ENCODE measurements at regions of chr6 and their contacts with region 1.

Region 1: DNA sequence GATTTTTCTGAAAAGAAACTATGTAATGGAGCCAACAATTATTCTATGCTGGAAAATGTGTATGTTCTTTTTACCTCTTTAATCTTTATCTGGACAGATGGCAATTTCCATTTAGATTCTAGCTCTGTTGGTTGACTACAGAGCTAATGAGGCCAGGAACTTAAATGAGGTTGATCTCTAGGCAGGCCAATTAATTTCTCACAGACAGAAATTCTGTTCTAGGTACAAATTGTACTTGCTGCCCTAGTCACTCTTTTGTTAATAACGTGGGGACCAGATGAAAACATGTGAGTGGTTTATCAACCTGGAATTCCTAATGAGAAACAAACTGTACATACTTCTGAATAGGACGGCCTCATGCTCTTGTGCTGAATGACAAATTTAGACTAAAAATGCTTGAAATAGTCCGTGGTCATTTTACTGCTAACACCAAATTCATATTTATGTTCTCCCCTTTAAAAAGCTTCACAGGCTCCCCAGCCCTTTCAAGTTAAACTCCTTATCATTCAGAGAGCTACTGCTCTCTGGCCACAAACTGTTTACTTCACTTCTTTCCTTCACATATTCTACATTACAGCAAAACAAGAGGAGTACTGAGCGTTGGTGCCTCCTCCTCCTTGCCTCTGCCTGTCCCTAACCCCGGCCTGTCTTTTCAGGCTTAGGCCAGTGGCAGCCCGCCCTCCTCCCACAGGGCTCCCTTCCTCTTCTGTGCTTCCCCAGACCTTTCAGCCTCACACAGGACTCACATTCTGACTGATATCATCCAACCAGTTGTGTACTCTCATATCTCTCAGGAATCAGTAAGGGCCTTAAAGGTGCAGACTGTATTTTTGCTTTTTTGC is 41.4 kb downstream of the DTNBP1 start:
- DNase-seq: no peak
- H3K4me3 Mint-ChIP-seq: no peak overlapping the region
- H3K27ac Mint-ChIP-seq: no peak overlapping the region
- H3K4me1 Mint-ChIP-seq: peaks cover 24% of the 10 kb centered on the region
- H3K27me3 Mint-ChIP-seq: no peaks in the 10 kb centered on the region

Region 2: DNA sequence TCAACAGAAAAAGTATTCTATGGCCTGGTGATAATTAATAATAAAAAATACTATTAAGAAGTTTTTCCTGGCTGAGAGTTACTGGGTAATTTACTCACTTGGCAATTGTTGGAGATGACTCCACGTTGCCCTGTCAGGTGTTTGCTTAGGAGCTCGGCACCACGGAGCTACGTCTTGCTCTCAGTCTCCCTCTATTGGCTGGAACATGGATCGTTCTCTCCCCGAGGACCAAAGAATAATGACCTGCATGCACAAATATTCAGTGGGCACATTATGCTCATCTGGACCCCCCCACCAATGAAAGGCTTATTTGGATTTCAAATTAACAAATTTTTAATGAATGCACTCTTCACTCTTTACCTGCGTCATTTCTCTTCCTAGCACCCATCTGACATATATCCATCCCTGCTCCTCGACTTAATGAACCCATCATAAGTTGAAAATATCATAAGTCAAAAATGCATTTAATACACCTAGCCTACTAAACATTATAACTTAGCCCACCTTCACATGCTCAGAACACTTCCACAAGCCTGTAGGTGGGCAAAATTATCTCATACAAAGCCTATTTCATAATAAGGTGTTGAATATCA is 1574.9 kb before region 1 on chr6:
- CTCF ChIA-PET with region 1: no interaction called
- intact Hi-C with region 1: loop called (anchors 10 kb)
- DNase-seq: peak; percentile 62
- H3K4me3 Mint-ChIP-seq: no peak overlapping the region
- H3K27ac Mint-ChIP-seq: no peak overlapping the region
- H3K4me1 Mint-ChIP-seq: no peaks in the 10 kb centered on the region
- H3K27me3 Mint-ChIP-seq: peaks cover 18% of the 10 kb centered on the region

Region 3: GRCh38 chr6:14210663-14211561 is 1410.5 kb before region 1 on chr6:
- CTCF ChIA-PET with region 1: interaction called, 3 read pairs
- intact Hi-C with region 1: loop called (anchors 1 kb)
- DNase-seq: peak; percentile 88
- H3K4me3 Mint-ChIP-seq: peak overlapping the region; percentile 79
- H3K27ac Mint-ChIP-seq: peak overlapping the region; percentile 71
- H3K4me1 Mint-ChIP-seq: peaks cover 12% of the 10 kb centered on the region
- H3K27me3 Mint-ChIP-seq: no peaks in the 10 kb centered on the region

Region 4: DNA sequence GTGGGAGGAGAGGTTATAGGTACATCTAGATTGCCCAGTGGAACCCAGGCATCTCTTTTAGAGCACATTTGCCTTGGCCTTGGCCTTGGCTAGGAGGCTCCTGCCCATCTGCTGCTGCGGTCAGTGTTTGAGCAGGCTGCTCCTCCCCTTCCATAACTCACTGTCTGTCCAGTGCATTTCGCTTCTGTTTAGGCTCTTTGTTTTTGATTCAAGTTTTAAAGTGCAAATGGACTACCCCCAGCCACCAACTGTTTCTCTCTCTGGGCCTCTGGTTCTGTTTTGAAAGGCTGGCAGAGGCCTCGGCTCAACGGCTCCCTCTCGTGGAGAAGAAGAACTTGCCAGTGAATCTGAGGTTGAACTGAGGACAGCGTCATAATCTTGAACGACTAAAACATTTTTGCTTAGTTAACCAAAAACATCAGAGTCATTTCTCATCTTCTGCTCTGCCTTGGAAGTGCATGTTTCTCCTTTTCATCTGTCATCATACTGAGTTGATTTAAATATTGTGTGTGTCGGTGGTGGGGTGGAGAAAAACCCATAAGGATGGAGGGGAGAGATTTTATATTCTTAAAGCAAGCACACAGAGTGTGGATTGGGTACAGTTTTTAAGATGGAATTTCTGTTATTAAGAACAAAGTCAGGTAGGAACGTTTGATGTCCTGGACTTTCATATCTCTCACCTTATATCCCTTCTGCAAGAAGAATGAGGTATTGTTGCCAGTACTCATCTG is 130.0 kb before region 1 on chr6:
- CTCF ChIA-PET with region 1: no interaction called
- intact Hi-C with region 1: loop called (anchors 1 kb)
- DNase-seq: peak; percentile 86
- H3K4me3 Mint-ChIP-seq: no peak overlapping the region
- H3K27ac Mint-ChIP-seq: peak overlapping the region; percentile 51
- H3K4me1 Mint-ChIP-seq: peaks cover 36% of the 10 kb centered on the region
- H3K27me3 Mint-ChIP-seq: no peaks in the 10 kb centered on the region

Region 5: DNA sequence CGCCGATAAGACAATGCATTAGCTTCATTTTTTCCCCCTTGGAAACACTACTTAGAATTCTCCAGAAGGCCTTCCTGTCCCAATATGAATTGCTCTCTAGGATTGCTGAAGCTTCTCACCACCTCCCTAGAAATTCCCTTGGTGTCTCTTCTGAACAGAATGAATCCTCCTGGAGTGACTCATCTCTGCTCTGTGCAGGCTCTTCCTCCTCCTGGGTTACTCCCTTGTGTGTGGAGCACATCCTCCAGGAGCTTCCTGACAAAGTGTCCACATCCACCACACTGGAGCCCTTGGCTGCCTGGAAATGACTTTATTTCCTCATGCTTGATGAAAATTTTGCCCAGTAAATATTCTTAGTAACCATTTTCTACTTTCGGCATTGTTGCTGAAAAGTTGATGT is 13.0 kb before region 1 on chr6:
- CTCF ChIA-PET with region 1: interaction called, 16 read pairs
- intact Hi-C with region 1: no loop called
- DNase-seq: no peak
- H3K4me3 Mint-ChIP-seq: no peak overlapping the region
- H3K27ac Mint-ChIP-seq: no peak overlapping the region
- H3K4me1 Mint-ChIP-seq: peaks cover 9% of the 10 kb centered on the region
- H3K27me3 Mint-ChIP-seq: no peaks in the 10 kb centered on the region

Measured in activated naive CD4-positive, alpha-beta T cell treated with anti-CD3 and anti-CD28 coated beads for 36 hours (primary cell).